ENCODE measurements at regions of chr2 and their contacts with region 1.

Region 1: GRCh38 chr2:32946314-32947075 is at the start of gene LTBP1:
- DNase-seq: peak; percentile 80 to 91 (median 90)
- ATAC-seq: peak; percentile 87 to 92
- H3K4me3 ChIP-seq: peak within 1 kb of the TSS; percentile 94
- H3K27ac ChIP-seq: peak within 1 kb of the TSS; percentile 70
- H3K4me1 ChIP-seq: no peaks in the 10 kb centered on the region
- H3K27me3 ChIP-seq: no peaks in the 10 kb centered on the region
- total RNA-seq, gene LTBP1: 103 to 218 (median 114) TPM

Region 2: DNA sequence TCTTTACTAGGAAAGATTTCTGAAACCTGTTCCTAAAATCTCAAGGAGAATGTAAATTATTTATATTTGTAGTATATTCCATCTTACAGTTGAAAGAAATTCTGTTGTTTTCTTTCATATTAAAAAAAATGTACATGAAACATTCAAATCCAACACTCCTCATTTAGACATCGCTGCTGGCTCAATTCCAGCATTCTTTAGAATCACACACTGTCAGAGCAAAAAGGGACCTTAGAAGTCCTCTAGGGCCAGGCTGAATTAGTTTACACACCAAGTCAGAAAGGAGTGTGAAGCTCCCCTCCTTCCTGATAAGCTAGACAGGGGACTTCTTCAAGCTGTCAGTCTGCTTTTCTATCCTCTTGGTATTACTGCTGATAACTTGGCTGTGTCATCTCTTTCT is 158.4 kb before region 1 on chr2:
- intact Hi-C with region 1: loop called in 1 of 4 experiments (anchors 10 kb)
- DNase-seq: no peak
- ATAC-seq: no peak
- H3K4me3 ChIP-seq: no peak overlapping the region
- H3K27ac ChIP-seq: no peak overlapping the region
- H3K4me1 ChIP-seq: peaks cover 7% of the 10 kb centered on the region
- H3K27me3 ChIP-seq: no peaks in the 10 kb centered on the region

Region 3: DNA sequence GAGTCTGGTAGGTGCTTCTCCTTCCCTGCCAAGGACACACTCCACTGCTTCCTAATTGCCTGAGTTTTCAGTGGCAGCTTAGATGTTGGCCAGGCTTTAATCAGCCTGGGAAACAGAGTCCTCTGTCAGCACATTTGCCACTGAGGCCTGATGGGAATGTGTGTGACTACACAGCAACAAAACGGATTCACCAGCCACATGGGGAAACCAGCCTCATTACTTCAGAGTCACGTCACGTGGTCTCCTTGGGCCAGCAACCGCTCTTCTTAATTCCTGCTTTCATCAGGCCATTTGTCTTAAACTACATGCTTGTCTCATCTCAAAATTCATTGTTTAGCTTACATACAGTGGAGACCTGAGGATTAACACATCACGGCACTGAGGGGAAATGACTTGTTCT is 93.6 kb before region 1 on chr2:
- intact Hi-C with region 1: no loop called
- DNase-seq: no peak
- ATAC-seq: no peak
- H3K4me3 ChIP-seq: no peak overlapping the region
- H3K27ac ChIP-seq: no peak overlapping the region
- H3K4me1 ChIP-seq: no peaks in the 10 kb centered on the region
- H3K27me3 ChIP-seq: no peaks in the 10 kb centered on the region

Region 4: GRCh38 chr2:33022989-33023727 is 76.7 kb after region 1 on chr2:
- intact Hi-C with region 1: loop called in 1 of 4 experiments (anchors 10 kb)
- DNase-seq: no peak
- ATAC-seq: peak in 1 of 2 donors; percentile 25
- H3K4me3 ChIP-seq: no peak overlapping the region
- H3K27ac ChIP-seq: no peak overlapping the region
- H3K4me1 ChIP-seq: peaks cover 3% of the 10 kb centered on the region
- H3K27me3 ChIP-seq: no peaks in the 10 kb centered on the region